ENCODE measurements at regions of chr2 and their contacts with region 1.

Region 1: GRCh38 chr2:230591850-230592249 is 120.8 kb upstream of the CAB39 start:
- DNase-seq: no peak
- H3K4me3 Mint-ChIP-seq: no peak overlapping the region
- H3K27ac Mint-ChIP-seq: peak overlapping the region; percentile 76
- H3K4me1 Mint-ChIP-seq: peaks cover 79% of the 10 kb centered on the region
- H3K27me3 Mint-ChIP-seq: no peaks in the 10 kb centered on the region

Region 2: DNA sequence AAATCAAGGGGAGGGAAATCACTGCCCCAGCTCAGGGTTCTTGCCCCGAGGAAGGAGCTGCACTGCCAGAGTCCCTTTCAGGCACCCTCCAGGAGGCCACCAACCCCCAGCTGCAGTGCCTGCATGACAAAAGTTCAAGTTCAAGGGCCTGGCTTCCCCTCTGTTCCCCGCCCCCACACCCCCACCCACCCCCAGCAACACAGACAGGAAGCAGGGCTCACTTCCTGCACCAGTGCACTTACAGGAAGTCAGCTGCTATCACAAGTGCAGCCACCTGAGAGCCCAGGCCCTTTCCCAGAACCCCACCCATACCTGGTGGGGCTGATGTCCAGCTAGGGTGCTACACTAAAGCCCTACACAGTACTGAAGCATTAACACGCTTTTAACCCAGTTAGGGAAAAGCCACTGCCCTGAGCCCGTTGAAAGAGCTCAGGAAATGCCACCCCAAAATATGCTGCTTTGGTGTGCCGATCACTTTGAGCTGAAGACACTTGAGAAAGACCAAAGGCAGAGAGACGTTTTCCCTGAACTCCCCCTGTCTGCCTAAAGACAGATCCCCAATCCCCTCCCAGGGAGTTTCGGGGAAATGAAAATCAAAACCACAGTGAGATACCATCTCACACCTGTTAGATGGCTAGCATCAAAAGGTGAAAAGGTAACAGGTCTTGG is 10.8 kb after region 1 on chr2:
- intact Hi-C with region 1: loop called (anchors 1 kb)
- DNase-seq: peak; percentile 37
- H3K4me3 Mint-ChIP-seq: peak overlapping the region; percentile 34
- H3K27ac Mint-ChIP-seq: peak overlapping the region; percentile 82
- H3K4me1 Mint-ChIP-seq: peaks cover 71% of the 10 kb centered on the region
- H3K27me3 Mint-ChIP-seq: no peaks in the 10 kb centered on the region